ENCODE measurements at regions of chr1 and their contacts with region 1.

Region 1: GRCh38 chr1:185156854-185157598 is at the starts of genes SWT1 and TRMT1L:
- DNase-seq: peak; percentile 99 to 100
- ATAC-seq: peak; percentile 99
- H3K4me3 ChIP-seq: peak within 1 kb of the TSS; percentile 85 to 93
- H3K27ac ChIP-seq: peak within 1 kb of the TSS; percentile 93 to 96
- H3K4me1 ChIP-seq: peaks cover 0 to 6% of the 10 kb centered on the region in 2 donors
- H3K27me3 ChIP-seq: no peaks in the 10 kb centered on the region
- total RNA-seq, gene SWT1: 6.9 to 7.8 TPM
- total RNA-seq, gene TRMT1L: 9.6 to 16.9 TPM

Region 2: DNA sequence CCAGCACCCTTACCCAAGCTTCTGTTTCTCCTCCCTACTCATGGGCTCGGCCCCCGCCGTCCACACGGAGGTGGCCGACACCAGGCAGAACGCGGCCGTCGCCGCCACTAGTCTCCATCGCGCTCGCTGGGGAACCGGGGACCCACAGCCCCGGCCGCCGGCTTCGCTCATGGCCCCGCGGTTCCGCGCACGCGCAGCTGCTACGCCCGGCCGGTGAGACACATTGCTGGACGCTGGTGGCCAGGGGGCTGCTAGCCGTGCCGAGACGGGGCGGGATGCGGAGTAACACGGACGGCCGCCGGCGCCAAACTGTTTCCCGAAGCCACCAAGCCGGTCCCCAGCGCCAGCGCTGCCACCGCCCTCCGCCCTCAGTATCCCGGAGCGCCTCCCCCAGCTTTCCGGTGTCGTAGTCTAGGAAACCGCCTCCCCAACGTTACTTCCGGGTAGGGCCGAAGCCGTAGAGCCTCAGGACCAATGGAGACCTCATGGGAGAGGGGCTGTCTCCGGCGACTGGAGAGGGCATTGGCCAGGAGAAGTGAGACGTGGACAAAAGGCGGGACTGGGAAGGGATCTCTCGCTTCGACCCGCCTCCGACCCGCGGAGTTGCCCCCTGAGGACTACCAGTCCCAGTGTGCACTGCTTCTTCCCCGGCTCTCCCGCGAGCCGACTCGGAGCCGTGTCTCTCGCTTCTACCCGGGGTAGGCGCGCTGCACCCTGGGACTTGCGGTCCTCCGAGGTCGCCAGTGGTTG is 402.4 kb before region 1 on chr1 and contains the start of gene EDEM3:
- intact Hi-C with region 1: loop called in 1 of 2 experiments (anchors 2 kb)
- DNase-seq: peak; percentile 98 to 99
- ATAC-seq: peak; percentile 99
- H3K4me3 ChIP-seq: peak within 1 kb of the TSS; percentile 78 to 91
- H3K27ac ChIP-seq: peak within 1 kb of the TSS in 1 of 2 donors; percentile 85
- H3K4me1 ChIP-seq: peaks cover 0 to 1% of the 10 kb centered on the region in 2 donors
- H3K27me3 ChIP-seq: no peaks in the 10 kb centered on the region
- total RNA-seq, gene EDEM3: 39.8 to 54.8 TPM

Region 3: DNA sequence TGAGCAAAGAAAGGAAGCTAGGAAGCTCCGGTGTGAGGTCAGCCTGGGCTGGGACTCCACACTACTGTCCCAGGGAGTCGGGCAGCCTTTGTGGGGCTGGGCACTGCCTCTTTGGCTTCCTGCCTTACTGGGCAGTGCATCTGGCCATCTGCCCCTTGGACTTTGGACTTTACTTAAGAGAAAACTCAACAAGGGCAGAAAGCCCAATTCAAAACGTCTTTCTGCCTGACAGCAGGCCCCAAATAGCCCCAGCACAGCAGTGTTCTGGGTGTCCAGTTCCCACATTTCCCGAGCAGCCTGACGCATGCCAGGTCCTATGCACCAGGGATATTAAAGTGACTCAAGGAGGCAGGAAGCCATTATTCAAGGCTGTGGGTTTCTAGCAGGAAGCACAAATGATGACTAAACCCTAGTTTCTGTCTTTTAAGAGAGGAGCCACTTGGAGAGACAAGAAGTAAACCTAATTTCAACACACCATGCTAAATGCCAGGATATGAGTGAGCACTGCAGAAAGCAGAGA is 364.5 kb before region 1 on chr1:
- intact Hi-C with region 1: loop called (anchors 10 kb)
- DNase-seq: peak; percentile 88 to 93
- ATAC-seq: peak; percentile 93
- H3K4me3 ChIP-seq: no peak overlapping the region
- H3K27ac ChIP-seq: peak overlapping the region; percentile 58 to 83
- H3K4me1 ChIP-seq: peaks cover 0 to 5% of the 10 kb centered on the region in 2 donors
- H3K27me3 ChIP-seq: no peaks in the 10 kb centered on the region

Region 4: GRCh38 chr1:185044981-185045813 is 111.8 kb before region 1 on chr1 and contains the start of gene RNF2:
- intact Hi-C with region 1: loop called in 1 of 2 experiments (anchors 5 kb)
- DNase-seq: peak; percentile 89 to 93
- ATAC-seq: peak; percentile 93
- H3K4me3 ChIP-seq: peak within 1 kb of the TSS; percentile 29 to 91
- H3K27ac ChIP-seq: peak within 1 kb of the TSS in 1 of 2 donors; percentile 42
- H3K4me1 ChIP-seq: peaks cover 3 to 6% of the 10 kb centered on the region in 2 donors
- H3K27me3 ChIP-seq: no peaks in the 10 kb centered on the region
- total RNA-seq, gene RNF2: 12.3 to 19.0 TPM

Region 5: GRCh38 chr1:185281245-185281644 is 124.2 kb after region 1 on chr1:
- intact Hi-C with region 1: no loop called
- DNase-seq: no peak
- ATAC-seq: no peak
- H3K4me3 ChIP-seq: no peak overlapping the region
- H3K27ac ChIP-seq: no peak overlapping the region
- H3K4me1 ChIP-seq: no peaks in the 10 kb centered on the region
- H3K27me3 ChIP-seq: no peaks in the 10 kb centered on the region

Region 6: DNA sequence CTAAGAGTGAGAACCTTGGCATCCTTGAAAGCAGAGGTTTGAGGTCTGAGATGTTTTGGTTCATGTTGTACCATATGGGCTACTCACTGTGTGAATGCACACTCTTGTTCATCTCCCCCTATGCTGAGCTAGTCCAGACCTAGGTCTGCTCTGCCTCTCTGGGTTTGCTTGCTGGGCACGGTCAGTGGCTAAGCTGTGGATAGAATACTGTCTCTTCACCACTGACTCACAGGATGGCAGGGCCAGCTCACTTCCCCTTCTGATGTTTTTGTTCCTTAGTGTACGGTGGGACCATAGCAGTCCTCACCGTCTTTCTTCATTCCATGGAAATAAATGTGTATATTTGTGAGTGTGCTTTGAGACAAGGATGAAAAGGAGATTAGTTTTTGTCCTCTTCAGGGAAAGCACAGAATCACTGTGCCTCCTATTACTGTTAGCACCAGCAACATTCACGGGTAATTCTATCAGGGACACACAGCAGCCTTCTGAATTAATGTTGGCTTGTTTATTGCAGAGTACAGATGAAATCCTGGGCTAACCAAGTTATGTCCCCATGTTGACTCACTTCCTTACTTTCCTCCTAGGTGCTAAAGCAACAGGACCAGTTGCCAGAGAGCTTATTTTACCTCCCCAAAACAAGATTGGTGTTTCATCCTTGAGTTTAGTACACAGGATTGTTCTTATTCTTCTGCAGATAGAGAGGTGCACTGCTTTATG is 216.9 kb after region 1 on chr1:
- intact Hi-C with region 1: no loop called
- DNase-seq: peak in 1 of 2 donors; percentile 66
- ATAC-seq: peak; percentile 48
- H3K4me3 ChIP-seq: no peak overlapping the region
- H3K27ac ChIP-seq: no peak overlapping the region
- H3K4me1 ChIP-seq: peaks cover 0 to 2% of the 10 kb centered on the region in 2 donors
- H3K27me3 ChIP-seq: no peaks in the 10 kb centered on the region

Measured in aorta (tissue), 5 donors.